Mucosa of descending colon (tissue), 3 donors: ENCODE measurements at regions of chr1 and their contacts with region 1.

Region 1: GRCh38 chr1:27097484-27097917 is 57.4 kb downstream of the SLC9A1 start:
- DNase-seq: peak; percentile 78 to 85 (median 80)
- ATAC-seq: peak; percentile 89
- H3K4me3 ChIP-seq: no peak overlapping the region
- H3K4me1 ChIP-seq: peaks cover 10% of the 10 kb centered on the region
- CTCF ChIP-seq: peak; percentile 97

Region 2: DNA sequence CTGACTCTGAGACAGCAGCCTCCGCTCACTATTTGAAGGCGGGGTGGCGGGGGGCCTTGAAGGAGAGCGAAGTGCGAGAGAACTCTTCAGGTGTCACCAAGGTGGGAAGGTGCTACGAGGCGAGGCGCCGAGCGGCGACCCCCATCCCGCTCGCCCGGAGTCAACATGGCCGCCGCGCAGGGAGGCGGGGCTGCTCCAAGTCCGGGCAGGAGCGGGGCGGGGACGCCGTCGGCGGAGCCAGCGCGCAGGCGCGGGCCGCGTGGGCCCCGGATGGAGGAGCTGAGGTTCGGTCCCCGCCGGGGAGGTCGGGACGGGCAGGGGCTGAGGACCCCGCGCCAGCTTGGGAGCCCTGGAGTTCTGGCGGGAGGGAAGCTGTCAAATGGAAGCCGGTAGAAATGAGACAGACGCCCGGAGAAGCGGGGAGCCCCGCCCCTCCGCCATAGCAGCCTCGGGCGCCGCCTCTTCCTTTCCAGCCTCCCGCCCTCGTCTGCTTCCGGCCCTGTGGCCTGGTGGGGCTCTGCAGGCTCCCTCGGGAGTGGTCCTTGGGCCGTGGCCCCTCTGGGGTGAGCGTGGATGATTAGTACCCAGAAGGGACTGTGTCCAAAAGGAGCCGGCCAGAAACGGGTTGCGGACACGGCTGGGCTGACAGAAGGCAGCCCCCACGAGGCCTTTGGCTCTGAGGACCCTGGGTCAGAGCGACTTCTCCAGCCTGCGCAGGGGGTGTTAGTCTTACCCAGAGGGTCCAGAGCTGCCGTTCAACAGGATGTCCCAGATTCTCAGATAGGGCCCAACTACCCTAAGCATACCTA is 309.6 kb before region 1 on chr1 and contains the start of gene PIGV:
- intact Hi-C with region 1: no loop called
- DNase-seq: peak; percentile 91 to 93 (median 93)
- ATAC-seq: peak; percentile 89
- H3K4me3 ChIP-seq: peak within 1 kb of the TSS; percentile 64
- H3K4me1 ChIP-seq: peaks cover 47% of the 10 kb centered on the region
- CTCF ChIP-seq: no peak
- total RNA-seq, gene PIGV: 16.5 to 22.3 (median 17.5) TPM

Region 3: GRCh38 chr1:26993237-26994019 is 104.1 kb before region 1 on chr1 and contains the start of gene TRNP1:
- intact Hi-C with region 1: loop called (anchors 10 kb)
- DNase-seq: peak; percentile 71 to 82 (median 73)
- ATAC-seq: peak; percentile 64
- H3K4me3 ChIP-seq: peak within 1 kb of the TSS; percentile 19
- H3K4me1 ChIP-seq: peaks cover 15% of the 10 kb centered on the region
- CTCF ChIP-seq: no peak
- total RNA-seq, gene TRNP1: 1.0 to 16.8 (median 3.0) TPM

Region 4: GRCh38 chr1:27044613-27045151 is 52.8 kb before region 1 on chr1:
- intact Hi-C with region 1: loop called (anchors 5 kb)
- DNase-seq: peak; percentile 83 to 96 (median 94)
- ATAC-seq: peak; percentile 97
- H3K4me3 ChIP-seq: no peak overlapping the region
- H3K4me1 ChIP-seq: peaks cover 6% of the 10 kb centered on the region
- CTCF ChIP-seq: peak; percentile 98

Region 5: DNA sequence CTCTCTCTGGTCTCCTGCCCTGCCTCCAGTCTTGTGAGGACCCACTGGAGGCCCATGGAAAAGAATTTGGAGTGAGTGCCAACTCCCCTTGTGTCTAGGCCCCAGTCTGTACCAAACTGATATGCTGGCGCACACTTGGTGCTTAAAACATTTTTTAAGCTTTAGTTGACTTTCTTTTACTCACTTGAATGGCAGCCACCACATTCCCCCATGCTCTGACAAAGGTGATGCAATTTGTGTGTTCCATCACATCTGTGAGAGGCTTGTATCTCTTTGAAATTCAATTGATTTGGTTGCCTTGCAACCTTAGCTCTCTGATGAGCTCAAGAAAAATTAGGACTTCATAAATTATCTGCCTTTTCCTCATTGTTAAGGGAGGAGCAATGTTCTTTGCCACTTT is 106.4 kb after region 1 on chr1:
- intact Hi-C with region 1: no loop called
- DNase-seq: no peak
- ATAC-seq: no peak
- H3K4me3 ChIP-seq: no peak overlapping the region
- H3K4me1 ChIP-seq: no peaks in the 10 kb centered on the region
- CTCF ChIP-seq: no peak